SK-N-SH (cell line): ENCODE measurements at regions of chr10 and their contacts with region 1.

Region 1: GRCh38 chr10:68348265-68348741 is 15.6 kb upstream of the PBLD start:
- DNase-seq: peak; percentile 45
- H3K4me3 ChIP-seq: no peak overlapping the region; a peak in 1 of 4 replicates
- H3K27ac ChIP-seq: peak overlapping the region in 1 of 2 experiments; percentile 26; a peak in 1 of 4 replicates
- H3K4me1 ChIP-seq: no peaks in the 10 kb centered on the region
- H3K27me3 ChIP-seq: no peaks in the 10 kb centered on the region
- CTCF ChIP-seq: peak; percentile 73
- EP300 ChIP-seq: no peak
- RAD21 ChIP-seq: peak; percentile 67

Region 2: GRCh38 chr10:68331455-68332258 is 16.6 kb before region 1 on chr10 and contains the start of gene HNRNPH3:
- CTCF ChIA-PET with region 1: interaction called, 26 read pairs
- POLR2A ChIA-PET with region 1: interaction called, 11 read pairs
- DNase-seq: peak; percentile 95
- H3K4me3 ChIP-seq: peak within 1 kb of the TSS; percentile 85 to 91
- H3K27ac ChIP-seq: peak within 1 kb of the TSS; percentile 95 to 98
- H3K4me1 ChIP-seq: peaks cover 27 to 35% of the 10 kb centered on the region in 2 experiments
- H3K27me3 ChIP-seq: no peaks in the 10 kb centered on the region
- CTCF ChIP-seq: 0 out of 2 replicates have a peak, but pooled peaks have one; percentile 14
- EP300 ChIP-seq: 0 out of 4 replicates have a peak, but pooled peaks of 1 of the 2 experiments have one; percentile 3
- RAD21 ChIP-seq: no peak
- polyA plus RNA-seq, gene HNRNPH3: 58.4 and 73.0 TPM in 2 replicates